Activated CD4-positive, alpha-beta T cell treated with anti-CD3 and anti-CD28 coated beads for 36 hours (primary cell): ENCODE measurements at regions of chr9 and their contacts with region 1.

Region 1: DNA sequence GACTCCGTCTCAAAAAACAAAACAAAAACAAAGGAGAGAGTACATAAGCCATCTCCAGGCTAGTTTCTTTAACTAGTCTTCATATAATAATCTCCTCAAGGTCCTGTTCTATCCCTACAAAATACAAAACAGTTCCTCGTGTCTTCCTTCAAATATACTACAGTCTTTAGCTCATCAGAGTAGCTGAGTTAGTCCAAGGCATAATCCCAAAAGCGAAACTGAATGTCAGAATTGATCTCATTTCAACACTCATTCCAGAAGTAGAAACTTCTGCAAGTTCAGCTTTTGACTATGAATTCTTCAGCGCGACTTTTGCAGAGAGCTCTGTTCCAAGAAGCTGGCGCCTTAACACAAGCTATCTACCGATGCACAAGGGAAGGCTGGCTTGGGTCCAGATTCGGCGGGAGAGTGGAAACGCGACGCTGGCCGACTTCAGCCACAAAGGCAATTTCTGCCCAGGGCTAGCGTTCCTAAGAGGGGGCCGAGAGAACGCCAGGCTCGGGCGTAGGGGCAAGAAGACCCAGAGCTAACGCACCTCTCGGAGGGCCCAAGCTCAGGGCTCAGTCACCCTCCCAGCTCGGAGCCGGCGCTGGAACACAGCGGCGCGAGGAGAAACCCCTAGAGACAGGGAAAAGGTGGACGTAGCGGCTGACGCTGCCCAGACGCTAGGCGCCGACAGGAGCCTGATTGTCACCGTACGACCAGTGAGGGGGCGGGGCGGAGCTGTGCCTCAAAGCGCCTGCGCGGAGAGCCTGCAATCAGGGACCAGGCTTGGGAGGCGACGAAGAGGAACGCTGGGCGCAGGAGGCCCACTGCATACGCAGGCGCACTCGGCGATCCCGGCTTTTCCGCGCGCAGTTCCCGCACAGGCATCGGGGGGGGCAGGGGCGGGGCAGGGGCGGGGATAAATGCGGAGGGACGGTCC is 469 bp upstream of the HSDL2 start:
- DNase-seq: peak; percentile 99
- ATAC-seq: peak; percentile 93
- H3K4me3 Mint-ChIP-seq: peak overlapping the region; percentile 98
- H3K27ac Mint-ChIP-seq: peak overlapping the region; percentile 100
- H3K4me1 Mint-ChIP-seq: peaks cover 42% of the 10 kb centered on the region
- H3K27me3 Mint-ChIP-seq: no peaks in the 10 kb centered on the region

Region 2: DNA sequence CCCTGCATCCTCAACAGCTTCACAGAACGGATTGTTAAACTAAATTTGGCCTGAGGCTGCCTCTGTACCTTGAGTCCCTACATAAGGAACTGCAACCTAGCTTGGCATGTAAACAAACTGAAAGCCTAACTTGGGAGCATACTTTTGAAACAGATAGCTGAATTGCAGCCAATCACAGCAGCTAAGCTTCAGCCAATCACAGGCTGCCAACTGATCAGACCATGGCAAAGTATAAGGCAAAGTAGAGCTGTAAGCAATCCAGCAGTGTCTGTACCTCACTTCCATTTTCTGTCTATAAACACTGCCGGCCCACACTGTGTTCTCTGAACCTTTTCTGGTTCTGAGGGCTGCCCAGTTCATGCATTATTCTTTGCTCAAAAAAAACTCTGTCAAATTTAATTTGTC is 863.4 kb before region 1 on chr9:
- CTCF ChIA-PET with region 1: no interaction called
- POLR2A ChIA-PET with region 1: no interaction called
- intact Hi-C with region 1: no loop called
- DNase-seq: no peak
- ATAC-seq: peak; percentile 49
- H3K4me3 Mint-ChIP-seq: no peak overlapping the region
- H3K27ac Mint-ChIP-seq: no peak overlapping the region
- H3K4me1 Mint-ChIP-seq: no peaks in the 10 kb centered on the region
- H3K27me3 Mint-ChIP-seq: no peaks in the 10 kb centered on the region

Region 3: GRCh38 chr9:111631071-111631971 is 748.1 kb before region 1 on chr9 and contains the start of gene DNAJC25:
- CTCF ChIA-PET with region 1: no interaction called
- POLR2A ChIA-PET with region 1: no interaction called
- intact Hi-C with region 1: loop called in 1 of 2 experiments (anchors 1 kb)
- DNase-seq: peak; percentile 98
- ATAC-seq: peak; percentile 98
- H3K4me3 Mint-ChIP-seq: peak within 1 kb of the TSS; percentile 94
- H3K27ac Mint-ChIP-seq: peak within 1 kb of the TSS; percentile 91
- H3K4me1 Mint-ChIP-seq: peaks cover 47% of the 10 kb centered on the region
- H3K27me3 Mint-ChIP-seq: no peaks in the 10 kb centered on the region
- total RNA-seq, gene DNAJC25: 6.3 to 7.5 TPM

Region 4: GRCh38 chr9:112174218-112174964 is 205.0 kb before region 1 on chr9:
- CTCF ChIA-PET with region 1: no interaction called
- POLR2A ChIA-PET with region 1: no interaction called
- intact Hi-C with region 1: loop called in 1 of 2 experiments (anchors 1 kb)
- DNase-seq: peak; percentile 87
- ATAC-seq: peak; percentile 87
- H3K4me3 Mint-ChIP-seq: peak overlapping the region; percentile 75
- H3K27ac Mint-ChIP-seq: peak overlapping the region; percentile 92
- H3K4me1 Mint-ChIP-seq: peaks cover 38% of the 10 kb centered on the region
- H3K27me3 Mint-ChIP-seq: peaks cover 11% of the 10 kb centered on the region

Region 5: GRCh38 chr9:112361601-112362000 is 17.8 kb before region 1 on chr9:
- CTCF ChIA-PET with region 1: interaction called, 12 read pairs
- POLR2A ChIA-PET with region 1: no interaction called
- intact Hi-C with region 1: loop called (anchors 1 to 2 kb)
- DNase-seq: no peak
- ATAC-seq: no peak
- H3K4me3 Mint-ChIP-seq: no peak overlapping the region
- H3K27ac Mint-ChIP-seq: no peak overlapping the region
- H3K4me1 Mint-ChIP-seq: peaks cover 11% of the 10 kb centered on the region
- H3K27me3 Mint-ChIP-seq: peaks cover 6% of the 10 kb centered on the region

Region 6: GRCh38 chr9:112750111-112750767 is 370.8 kb after region 1 on chr9 and contains the start of gene SNX30:
- CTCF ChIA-PET with region 1: no interaction called
- POLR2A ChIA-PET with region 1: no interaction called
- intact Hi-C with region 1: loop called in 1 of 2 experiments (anchors 2 kb)
- DNase-seq: peak; percentile 83
- ATAC-seq: peak; percentile 45
- H3K4me3 Mint-ChIP-seq: peak within 1 kb of the TSS; percentile 83
- H3K27ac Mint-ChIP-seq: peak within 1 kb of the TSS; percentile 91
- H3K4me1 Mint-ChIP-seq: peaks cover 63% of the 10 kb centered on the region
- H3K27me3 Mint-ChIP-seq: no peaks in the 10 kb centered on the region
- total RNA-seq, gene SNX30: 4.2 to 4.6 TPM

Region 7: GRCh38 chr9:112784020-112784781 is 404.8 kb after region 1 on chr9:
- CTCF ChIA-PET with region 1: no interaction called
- POLR2A ChIA-PET with region 1: no interaction called
- intact Hi-C with region 1: no loop called
- DNase-seq: no peak
- ATAC-seq: no peak
- H3K4me3 Mint-ChIP-seq: no peak overlapping the region
- H3K27ac Mint-ChIP-seq: no peak overlapping the region
- H3K4me1 Mint-ChIP-seq: peaks cover 17% of the 10 kb centered on the region
- H3K27me3 Mint-ChIP-seq: no peaks in the 10 kb centered on the region

Region 8: GRCh38 chr9:112945620-112946208 is 566.3 kb after region 1 on chr9:
- CTCF ChIA-PET with region 1: no interaction called
- POLR2A ChIA-PET with region 1: no interaction called
- intact Hi-C with region 1: no loop called
- DNase-seq: peak; percentile 41
- ATAC-seq: peak; percentile 26
- H3K4me3 Mint-ChIP-seq: no peak overlapping the region
- H3K27ac Mint-ChIP-seq: no peak overlapping the region
- H3K4me1 Mint-ChIP-seq: no peaks in the 10 kb centered on the region
- H3K27me3 Mint-ChIP-seq: peaks cover 11% of the 10 kb centered on the region